MCF 10A (cell line): ENCODE measurements at regions of chr14 and their contacts with region 1.

Region 1: DNA sequence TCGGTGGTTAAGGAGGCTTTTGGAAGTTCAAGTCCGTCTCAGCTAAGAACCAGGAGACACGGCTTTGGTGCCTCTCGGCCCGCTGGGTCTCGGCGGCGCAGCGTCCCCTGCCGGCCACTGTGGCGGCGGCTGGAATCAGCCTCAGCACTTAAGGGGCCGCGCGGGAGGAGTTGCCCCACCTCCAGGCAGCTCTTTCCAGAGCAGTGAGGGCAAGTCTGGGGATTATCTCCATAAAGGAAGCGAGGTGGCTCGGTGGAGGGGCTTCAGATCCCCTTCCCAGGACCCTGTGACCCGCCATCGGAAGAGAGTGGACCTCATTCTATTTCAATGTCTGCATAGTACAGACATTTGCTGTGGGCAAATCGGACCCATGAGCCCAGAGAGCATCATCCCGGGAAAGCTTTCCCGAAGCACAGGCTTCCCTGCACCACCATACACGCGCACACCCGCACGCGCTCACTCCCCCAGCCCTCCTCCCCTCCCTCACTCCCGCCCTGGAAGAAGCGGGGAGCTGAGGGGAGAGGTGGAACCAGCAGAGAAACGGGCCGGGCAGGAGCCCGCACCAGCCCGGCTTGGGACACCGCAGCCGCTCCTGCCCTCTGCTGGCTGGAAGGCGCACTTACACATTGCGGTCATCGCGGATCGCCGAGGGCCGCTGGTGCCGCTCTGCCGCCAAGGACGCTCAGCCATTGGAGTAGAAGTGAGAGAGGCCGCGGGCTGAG is 15.9 kb downstream of the RNASE2 start:
- DNase-seq: peak; percentile 78
- H3K4me3 Mint-ChIP-seq: peak overlapping the region; percentile 84
- H3K27ac Mint-ChIP-seq: peak overlapping the region; percentile 27
- H3K4me1 Mint-ChIP-seq: peaks cover 16% of the 10 kb centered on the region
- H3K27me3 Mint-ChIP-seq: peaks cover 8% of the 10 kb centered on the region
- CTCF ChIP-seq: peak; percentile 75

Region 2: DNA sequence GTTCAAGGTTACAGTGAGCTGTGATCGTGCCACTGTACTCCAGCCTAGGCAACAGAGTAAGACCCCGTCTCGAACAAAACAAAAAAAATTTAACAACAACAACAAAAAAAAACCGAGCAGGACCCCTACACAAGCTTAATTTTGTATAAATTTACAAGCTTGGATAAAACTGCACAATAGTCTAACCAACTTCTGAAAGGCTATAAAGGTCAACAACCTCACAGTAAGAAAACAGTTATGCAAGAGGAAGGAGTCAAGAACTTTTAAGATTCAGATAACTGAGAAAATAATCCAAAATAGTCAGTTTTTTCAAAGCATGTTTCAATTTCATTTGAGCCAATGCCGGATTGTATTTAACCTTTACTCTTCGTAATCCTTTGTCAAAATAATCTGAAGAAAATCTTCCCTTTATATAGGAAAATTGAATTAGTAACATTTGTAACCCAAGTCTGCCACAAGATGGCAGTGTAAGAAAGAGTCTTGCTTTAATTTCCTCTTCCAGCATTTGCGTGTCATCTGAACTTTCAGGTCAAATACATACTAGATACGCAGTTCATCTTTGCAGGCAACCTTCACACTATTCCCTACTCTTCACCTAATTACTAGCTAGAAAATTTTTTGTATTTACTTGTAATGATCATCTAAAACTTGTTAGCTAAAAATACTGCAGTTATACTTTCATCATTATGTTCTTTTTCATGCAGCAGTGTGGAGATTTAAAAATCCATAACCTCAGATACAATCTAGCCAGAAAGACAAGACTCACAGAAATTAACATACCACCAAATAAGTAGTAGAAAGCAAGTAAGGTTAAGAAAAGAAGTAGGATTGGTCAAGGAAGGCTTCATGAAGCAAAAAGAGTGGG is 643.9 kb before region 1 on chr14:
- CTCF ChIA-PET with region 1: interaction called, 3 read pairs
- POLR2A ChIA-PET with region 1: no interaction called
- intact Hi-C with region 1: loop called (anchors 10 kb)
- DNase-seq: peak; percentile 78
- H3K4me3 Mint-ChIP-seq: no peak overlapping the region
- H3K27ac Mint-ChIP-seq: no peak overlapping the region
- H3K4me1 Mint-ChIP-seq: peaks cover 31% of the 10 kb centered on the region
- H3K27me3 Mint-ChIP-seq: no peaks in the 10 kb centered on the region
- CTCF ChIP-seq: peak; percentile 66

Region 3: GRCh38 chr14:20697273-20698017 is 273.7 kb before region 1 on chr14:
- CTCF ChIA-PET with region 1: interaction called, 20 read pairs
- POLR2A ChIA-PET with region 1: no interaction called
- intact Hi-C with region 1: loop called (anchors 1 kb)
- DNase-seq: peak; percentile 78
- H3K4me3 Mint-ChIP-seq: no peak overlapping the region
- H3K27ac Mint-ChIP-seq: no peak overlapping the region
- H3K4me1 Mint-ChIP-seq: no peaks in the 10 kb centered on the region
- H3K27me3 Mint-ChIP-seq: no peaks in the 10 kb centered on the region
- CTCF ChIP-seq: peak; percentile 73

Region 4: DNA sequence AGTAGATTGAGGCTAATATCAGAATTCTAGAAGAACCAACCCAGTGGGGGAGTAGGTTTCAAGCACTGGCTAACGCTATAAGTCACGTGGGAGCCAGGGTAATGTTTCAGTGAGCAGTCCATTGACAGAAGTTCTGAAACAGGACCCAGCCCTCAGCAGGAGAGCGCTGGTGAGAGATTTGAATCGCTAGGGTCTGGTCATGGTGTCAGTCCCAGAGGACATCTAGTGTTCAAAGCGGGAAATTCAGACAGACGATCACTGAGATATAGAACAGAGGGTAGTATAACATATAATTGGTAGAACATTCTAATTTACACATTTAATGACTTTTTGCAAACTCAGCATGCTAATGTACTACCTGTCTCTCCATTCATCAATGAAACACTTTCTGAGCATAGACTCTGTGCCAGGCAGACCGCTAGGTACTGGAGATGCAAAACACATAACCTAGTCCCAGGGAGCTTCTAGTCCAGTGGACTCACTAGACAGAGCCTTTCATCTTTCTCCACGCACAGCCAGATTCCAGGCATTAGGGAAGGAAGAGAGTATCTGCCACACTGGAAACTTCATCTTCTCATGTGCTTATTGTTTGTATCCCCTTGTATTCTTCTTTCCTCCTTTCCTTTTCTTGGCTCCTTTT is 115.4 kb before region 1 on chr14:
- CTCF ChIA-PET with region 1: interaction called, 113 read pairs
- POLR2A ChIA-PET with region 1: interaction called, 11 read pairs
- intact Hi-C with region 1: loop called (anchors 1 kb)
- DNase-seq: peak; percentile 75
- H3K4me3 Mint-ChIP-seq: no peak overlapping the region
- H3K27ac Mint-ChIP-seq: no peak overlapping the region
- H3K4me1 Mint-ChIP-seq: peaks cover 5% of the 10 kb centered on the region
- H3K27me3 Mint-ChIP-seq: peaks cover 47% of the 10 kb centered on the region
- CTCF ChIP-seq: peak; percentile 68

Region 5: DNA sequence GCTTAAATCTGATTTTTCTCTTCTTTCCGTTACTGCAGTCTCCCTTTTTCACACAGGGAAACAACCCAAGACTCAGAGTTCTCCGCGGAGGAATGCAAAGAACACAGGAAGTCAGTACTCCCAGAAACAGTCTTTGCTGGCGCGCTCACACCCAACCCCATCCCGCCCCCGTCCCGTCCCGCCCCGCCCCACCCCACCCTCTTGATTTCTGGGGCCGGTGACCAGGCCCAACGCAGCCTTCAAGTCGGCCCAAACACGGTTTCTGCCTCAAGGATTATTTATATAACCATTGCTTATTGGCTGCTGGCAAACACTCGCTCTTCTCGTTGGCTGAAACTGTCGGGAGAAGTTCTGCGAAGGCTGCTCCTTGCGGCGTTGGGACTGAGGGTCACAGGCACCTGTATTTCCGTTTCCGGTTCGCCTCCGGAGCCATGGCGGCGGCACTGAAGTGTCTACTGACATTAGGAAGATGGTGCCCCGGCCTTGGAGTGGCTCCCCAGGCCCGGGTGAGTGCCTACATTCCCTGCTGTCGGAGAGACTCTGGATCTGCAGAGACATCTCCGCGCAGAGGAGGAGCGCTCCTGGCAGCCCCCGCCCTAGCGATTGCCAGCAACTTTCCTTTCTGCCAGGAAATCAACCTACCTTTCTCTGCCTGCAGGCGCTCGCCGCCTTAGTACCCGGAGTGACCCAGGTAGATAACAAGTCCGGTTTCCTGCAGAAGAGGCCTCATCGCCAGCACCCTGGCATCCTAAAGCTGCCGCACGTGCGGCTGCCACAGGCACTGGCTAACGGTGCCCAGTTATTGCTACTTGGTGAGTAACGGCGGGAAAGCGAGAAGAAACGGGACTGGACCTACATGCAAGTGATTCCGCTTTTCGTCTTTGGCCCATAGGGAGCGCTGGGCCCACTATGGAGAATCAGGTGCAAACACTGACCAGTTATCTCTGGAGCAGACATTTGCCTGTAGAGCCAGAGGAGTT is 18.7 kb after region 1 on chr14 and contains the start of gene METTL17:
- CTCF ChIA-PET with region 1: interaction called, 147 read pairs
- POLR2A ChIA-PET with region 1: interaction called, 26 read pairs
- intact Hi-C with region 1: loop called (anchors 1 kb)
- DNase-seq: peak; percentile 98
- H3K4me3 Mint-ChIP-seq: peak within 1 kb of the TSS; percentile 80
- H3K27ac Mint-ChIP-seq: peak within 1 kb of the TSS; percentile 91
- H3K4me1 Mint-ChIP-seq: peaks cover 24% of the 10 kb centered on the region
- H3K27me3 Mint-ChIP-seq: no peaks in the 10 kb centered on the region
- CTCF ChIP-seq: peak; percentile 7
- total RNA-seq, gene METTL17: 62.4 and 70.2 TPM in 2 replicates

Region 6: GRCh38 chr14:21039585-21040369 is 68.6 kb after region 1 on chr14:
- CTCF ChIA-PET with region 1: interaction called, 63 read pairs
- POLR2A ChIA-PET with region 1: no interaction called
- intact Hi-C with region 1: loop called (anchors 2 kb)
- DNase-seq: peak; percentile 69
- H3K4me3 Mint-ChIP-seq: no peak overlapping the region
- H3K27ac Mint-ChIP-seq: no peak overlapping the region
- H3K4me1 Mint-ChIP-seq: peaks cover 34% of the 10 kb centered on the region
- H3K27me3 Mint-ChIP-seq: no peaks in the 10 kb centered on the region
- CTCF ChIP-seq: peak; percentile 51